Activated CD8-positive, alpha-beta T cell treated with anti-CD3 and anti-CD28 coated beads for 36 hours (primary cell): ENCODE measurements at regions of chr10 and their contacts with region 1.

Region 1: DNA sequence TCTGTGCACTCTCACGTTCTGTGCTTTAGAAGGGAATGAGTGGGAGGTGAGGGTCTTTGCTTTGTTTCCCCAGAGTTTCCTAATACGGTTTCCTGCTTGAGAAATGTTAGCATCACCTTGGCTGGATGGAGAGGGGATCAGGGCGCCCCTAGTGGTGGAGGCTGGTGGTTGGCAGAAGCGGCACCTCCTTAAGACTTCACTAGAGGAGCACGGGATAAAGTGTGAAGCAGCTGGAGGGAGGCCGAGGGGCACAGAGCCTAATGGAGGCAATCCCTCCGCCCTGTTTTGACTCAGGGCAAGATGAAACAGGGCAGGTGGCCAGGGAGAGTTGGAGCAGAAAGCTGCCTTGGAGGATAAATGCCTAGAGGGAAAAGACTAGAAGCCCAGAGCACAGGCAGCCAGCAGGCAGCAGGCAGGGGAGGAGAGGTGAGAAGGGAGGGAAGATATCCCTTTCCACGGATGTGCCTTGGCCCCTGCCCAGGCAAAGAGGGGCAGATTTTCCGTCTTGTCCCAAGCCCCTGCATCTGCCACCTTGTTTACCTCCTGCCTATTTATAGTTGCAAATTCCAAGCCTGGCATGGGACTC is 56.0 kb upstream of the BTRC start:
- DNase-seq: peak; percentile 88
- ATAC-seq: peak; percentile 91
- H3K4me3 Mint-ChIP-seq: no peak overlapping the region
- H3K27ac Mint-ChIP-seq: no peak overlapping the region
- H3K4me1 Mint-ChIP-seq: no peaks in the 10 kb centered on the region
- H3K27me3 Mint-ChIP-seq: peaks cover 37% of the 10 kb centered on the region
- CTCF ChIP-seq: peak; percentile 94

Region 2: GRCh38 chr10:101311185-101312066 is 13.4 kb after region 1 on chr10:
- CTCF ChIA-PET with region 1: interaction called, 15 read pairs
- POLR2A ChIA-PET with region 1: no interaction called
- intact Hi-C with region 1: no loop called
- DNase-seq: peak; percentile 14
- ATAC-seq: no peak
- H3K4me3 Mint-ChIP-seq: peak overlapping the region; percentile 37
- H3K27ac Mint-ChIP-seq: no peak overlapping the region
- H3K4me1 Mint-ChIP-seq: peaks cover 7% of the 10 kb centered on the region
- H3K27me3 Mint-ChIP-seq: peaks cover 37% of the 10 kb centered on the region
- CTCF ChIP-seq: no peak